ENCODE measurements at regions of chr1 and their contacts with region 1.

Region 1: DNA sequence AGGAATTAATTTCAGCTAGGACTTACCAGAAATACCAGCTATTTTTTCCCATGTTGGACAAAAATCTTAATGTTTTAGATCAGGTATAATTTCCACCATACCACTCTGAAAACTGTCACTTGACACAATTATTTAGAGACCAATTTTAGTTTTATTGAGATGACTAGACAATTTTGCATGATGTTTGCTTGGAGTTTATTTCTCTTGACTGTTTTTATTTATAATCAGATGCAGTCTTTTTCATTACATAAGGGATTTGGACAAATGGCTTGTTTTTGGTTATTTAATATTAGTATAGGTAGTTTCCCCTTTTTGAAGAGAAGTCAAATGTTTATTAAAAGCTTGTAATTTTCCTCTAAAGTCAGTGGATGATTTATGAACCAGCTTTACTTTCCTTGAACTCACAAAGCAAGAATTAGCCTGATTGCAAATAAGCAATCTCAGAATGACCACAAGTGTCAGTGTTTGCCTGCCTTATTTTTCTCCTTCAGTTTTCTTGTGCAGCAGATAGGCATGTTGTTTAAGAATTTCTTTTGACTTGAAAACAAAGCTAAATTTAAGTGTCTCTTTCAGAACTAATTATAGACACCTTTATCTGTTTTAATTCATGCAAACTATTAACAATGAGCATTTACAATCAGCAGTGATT is 3.8 kb upstream of the B3GALT2 start:
- DNase-seq: no peak
- ATAC-seq: peak; percentile 46

Region 2: GRCh38 chr1:193241132-193241827 is 51.1 kb after region 1 on chr1:
- intact Hi-C with region 1: loop called (anchors 10 kb)
- DNase-seq: no peak
- ATAC-seq: no peak